Activated T-helper 1 cell treated with anti-CD3 and anti-CD28 coated beads, Interleukin-12 subunit alpha, Interleukin-12 subunit beta, Interleukin-2, Interleukin-4 antibody, amounts not matched to agents 30 ng/mL and 10 ng/mL and 1 ng/mL, durations not matched to agents 14 hours and 24 hours and 36 hours (primary cell): ENCODE measurements at regions of chr5 and their contacts with region 1.

Region 1: DNA sequence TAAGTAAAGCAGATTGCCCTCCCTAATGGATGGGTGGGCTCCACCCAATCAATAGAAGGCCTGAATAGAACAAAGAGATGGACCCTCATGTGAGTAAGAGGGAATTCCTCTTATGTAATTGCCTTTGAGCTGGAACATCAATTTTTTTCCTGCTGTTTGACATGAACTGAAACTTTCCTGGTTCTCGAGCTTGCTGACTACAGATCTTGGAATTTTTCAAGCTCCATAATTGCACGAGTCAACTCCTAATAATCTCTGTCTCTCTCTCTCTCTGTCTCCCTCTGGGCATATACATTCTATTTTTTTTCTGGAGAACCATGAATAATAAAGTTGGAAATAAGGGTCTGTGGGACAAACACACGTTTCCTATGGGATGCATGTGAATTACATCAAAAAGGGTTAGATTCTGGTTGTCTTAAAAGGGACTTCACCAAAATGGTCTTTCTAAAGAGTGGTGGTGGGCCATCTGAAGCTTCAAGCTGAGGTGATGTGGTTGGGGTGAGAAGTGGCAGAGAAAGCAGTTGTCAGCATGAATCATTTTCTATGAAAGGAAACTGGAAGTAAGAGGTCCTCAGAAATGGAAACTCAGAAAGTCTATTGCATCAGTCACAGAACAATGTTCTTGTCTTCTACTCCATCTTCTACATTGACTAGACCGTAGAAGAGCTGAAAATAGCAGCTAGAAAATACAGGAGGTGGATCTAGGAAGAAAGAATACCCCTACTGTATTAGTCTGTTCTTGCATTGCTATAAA is 47.0 kb upstream of the HOMER1 start:
- DNase-seq: peak; percentile 8
- H3K4me3 Mint-ChIP-seq: peak overlapping the region; percentile 67
- H3K27ac Mint-ChIP-seq: peak overlapping the region; percentile 89
- H3K4me1 Mint-ChIP-seq: peaks cover 44% of the 10 kb centered on the region
- H3K27me3 Mint-ChIP-seq: no peaks in the 10 kb centered on the region

Region 2: DNA sequence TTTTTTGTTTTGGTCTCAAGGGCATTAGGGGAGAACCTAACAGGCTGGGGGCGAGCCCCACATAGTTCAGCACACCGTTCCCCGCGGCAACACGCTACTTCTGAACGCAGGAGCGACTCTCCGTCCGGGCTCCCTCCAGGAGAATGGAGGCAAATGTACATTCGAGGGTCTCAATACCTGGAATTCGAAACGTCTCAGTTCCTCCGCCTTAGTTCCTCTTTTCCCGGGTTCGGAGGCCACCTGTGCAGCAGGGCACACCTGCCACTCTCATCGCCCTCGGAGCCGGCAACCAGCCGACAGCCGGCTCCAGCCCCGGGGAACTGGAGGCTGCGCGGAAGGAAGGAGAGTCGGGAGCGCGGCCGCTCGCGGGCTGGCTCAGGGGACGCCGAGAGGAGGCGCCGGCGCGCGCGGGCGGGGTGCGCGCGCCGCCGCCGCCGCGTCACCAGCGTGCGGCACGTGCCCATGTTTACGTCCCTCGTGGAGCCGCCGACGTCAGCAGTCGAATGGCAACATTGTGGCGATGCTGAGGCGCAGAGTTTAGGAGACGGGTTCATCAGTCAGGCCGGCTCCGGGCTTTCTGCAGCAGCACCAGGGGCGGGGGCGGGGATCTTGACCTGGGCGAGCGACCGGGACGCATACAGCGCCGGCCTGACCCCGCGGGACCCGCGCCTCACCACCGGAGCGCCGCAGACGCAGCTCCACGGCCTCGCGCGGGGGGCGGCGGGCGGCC is 325.1 kb before region 1 on chr5 and contains the start of gene JMY:
- intact Hi-C with region 1: loop called (anchors 5 kb)
- DNase-seq: peak; percentile 77
- H3K4me3 Mint-ChIP-seq: peak within 1 kb of the TSS; percentile 94
- H3K27ac Mint-ChIP-seq: peak within 1 kb of the TSS; percentile 95
- H3K4me1 Mint-ChIP-seq: peaks cover 33% of the 10 kb centered on the region
- H3K27me3 Mint-ChIP-seq: peaks cover 2% of the 10 kb centered on the region
- total RNA-seq, gene JMY: 5.5 and 5.9 TPM in 2 replicates

Region 3: GRCh38 chr5:79514391-79515105 is 46.4 kb before region 1 on chr5:
- intact Hi-C with region 1: loop called (anchors 1 kb)
- DNase-seq: peak; percentile 88
- H3K4me3 Mint-ChIP-seq: peak overlapping the region; percentile 99
- H3K27ac Mint-ChIP-seq: peak overlapping the region; percentile 100
- H3K4me1 Mint-ChIP-seq: peaks cover 43% of the 10 kb centered on the region
- H3K27me3 Mint-ChIP-seq: peaks cover 26% of the 10 kb centered on the region

Region 4: DNA sequence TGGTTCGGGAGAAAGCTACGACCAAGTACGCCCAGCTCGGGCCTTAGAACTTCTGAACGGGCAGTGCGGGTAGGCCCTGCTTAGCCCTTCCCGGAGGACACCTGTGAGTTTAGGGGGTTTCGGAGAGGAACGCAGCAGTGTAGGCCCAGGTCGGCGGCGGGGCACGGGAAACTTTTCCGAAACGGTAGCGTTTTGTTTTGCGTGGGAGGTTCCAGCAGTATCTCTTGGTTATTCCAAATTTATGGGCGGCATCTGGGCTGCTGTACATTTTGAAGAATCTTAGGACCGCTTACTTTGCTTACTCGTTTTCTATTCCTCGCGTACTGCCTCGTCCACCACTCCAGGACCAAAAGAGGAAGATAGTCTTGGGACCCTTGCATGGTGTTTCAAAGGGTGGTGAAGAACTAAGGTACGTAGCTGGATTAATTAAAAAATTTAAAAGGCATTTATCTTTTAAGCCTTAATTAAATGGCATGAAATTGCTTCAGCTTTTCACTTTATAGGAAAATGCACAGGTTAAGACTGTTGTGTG is 51.8 kb after region 1 on chr5:
- intact Hi-C with region 1: loop called (anchors 1 kb)
- DNase-seq: no peak
- H3K4me3 Mint-ChIP-seq: peak overlapping the region; percentile 91
- H3K27ac Mint-ChIP-seq: peak overlapping the region; percentile 97
- H3K4me1 Mint-ChIP-seq: peaks cover 45% of the 10 kb centered on the region
- H3K27me3 Mint-ChIP-seq: no peaks in the 10 kb centered on the region

Region 5: GRCh38 chr5:79702606-79703382 is 141.8 kb after region 1 on chr5:
- intact Hi-C with region 1: loop called (anchors 2 kb)
- DNase-seq: no peak
- H3K4me3 Mint-ChIP-seq: no peak overlapping the region
- H3K27ac Mint-ChIP-seq: no peak overlapping the region
- H3K4me1 Mint-ChIP-seq: peaks cover 22% of the 10 kb centered on the region
- H3K27me3 Mint-ChIP-seq: peaks cover 4% of the 10 kb centered on the region

Region 6: GRCh38 chr5:79736528-79737514 is 175.9 kb after region 1 on chr5:
- intact Hi-C with region 1: loop called (anchors 1 kb)
- DNase-seq: peak; percentile 2
- H3K4me3 Mint-ChIP-seq: peak overlapping the region; percentile 53
- H3K27ac Mint-ChIP-seq: peak overlapping the region; percentile 46
- H3K4me1 Mint-ChIP-seq: peaks cover 43% of the 10 kb centered on the region
- H3K27me3 Mint-ChIP-seq: peaks cover 50% of the 10 kb centered on the region

Region 7: DNA sequence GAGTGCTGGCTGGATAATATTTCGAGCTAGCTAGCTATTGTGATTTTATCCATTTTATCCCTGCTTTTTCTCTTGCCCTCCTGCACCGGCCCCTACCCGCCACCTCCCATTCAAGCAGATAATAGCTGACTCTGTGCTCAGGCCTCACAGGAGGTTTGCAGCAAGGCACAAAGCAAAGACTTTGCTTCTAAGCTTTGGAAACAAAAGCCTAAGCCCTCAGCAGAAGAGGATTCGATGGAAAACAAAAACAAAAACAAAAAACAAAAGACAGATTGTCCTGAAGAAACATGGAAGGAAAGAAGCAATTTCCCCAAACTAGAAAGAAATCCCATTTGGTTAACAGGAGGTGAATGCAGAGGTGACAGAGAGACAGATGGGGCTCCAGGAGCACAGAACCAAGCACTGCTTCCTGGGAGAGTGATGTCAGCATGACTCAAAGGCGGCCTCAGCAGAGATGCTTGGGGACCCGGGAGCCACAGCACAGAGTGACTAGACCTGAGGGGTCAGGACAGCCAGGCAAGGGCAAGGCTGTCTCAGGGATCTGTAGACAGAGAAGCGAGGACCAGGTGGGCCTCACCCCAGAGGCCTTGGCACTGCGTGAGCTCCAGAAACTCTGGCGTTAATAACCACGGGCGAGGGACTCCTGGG is 401.8 kb after region 1 on chr5:
- intact Hi-C with region 1: loop called (anchors 1 kb)
- DNase-seq: peak; percentile 29
- H3K4me3 Mint-ChIP-seq: peak overlapping the region; percentile 35
- H3K27ac Mint-ChIP-seq: peak overlapping the region; percentile 85
- H3K4me1 Mint-ChIP-seq: peaks cover 39% of the 10 kb centered on the region
- H3K27me3 Mint-ChIP-seq: no peaks in the 10 kb centered on the region